Activated CD8-positive, alpha-beta T cell treated with anti-CD3 and anti-CD28 coated beads, Interleukin-2, amount 10 ng/mL, durations not matched to agents 7 days and 5 days (primary cell): ENCODE measurements at regions of chr3 and their contacts with region 1.

Region 1: DNA sequence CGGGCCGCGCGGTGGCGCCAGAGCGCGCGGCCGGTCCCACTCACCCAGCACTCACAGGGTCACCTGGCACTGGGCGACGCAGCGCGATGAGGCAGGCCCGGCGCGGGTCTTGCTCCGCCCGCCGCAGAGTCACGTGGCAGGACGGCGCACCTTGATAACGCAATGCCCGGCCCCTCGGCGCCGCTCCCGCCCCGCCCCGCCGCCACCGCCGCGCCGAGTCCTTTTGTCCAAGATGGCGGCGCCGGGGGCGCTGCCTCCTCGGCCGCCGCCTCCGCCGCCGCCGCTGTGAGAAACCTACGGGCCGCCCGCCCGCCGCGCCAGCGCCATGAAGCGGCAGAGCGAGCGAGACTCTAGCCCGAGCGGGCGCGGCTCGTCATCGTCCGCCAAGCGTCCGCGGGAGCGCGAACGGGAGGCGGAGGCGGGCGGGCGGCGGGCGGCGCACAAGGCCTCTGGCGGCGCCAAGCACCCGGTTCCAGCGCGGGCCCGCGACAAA is at the start of gene RBM15B:
- DNase-seq: peak; percentile 98
- ATAC-seq: peak; percentile 95
- H3K4me3 Mint-ChIP-seq: peak within 1 kb of the TSS; percentile 83
- H3K27ac Mint-ChIP-seq: peak within 1 kb of the TSS; percentile 94
- H3K4me1 Mint-ChIP-seq: peaks cover 79% of the 10 kb centered on the region
- H3K27me3 Mint-ChIP-seq: no peaks in the 10 kb centered on the region
- total RNA-seq, gene RBM15B: 30.7 to 30.8 TPM

Region 2: GRCh38 chr3:51379301-51379700 is 11.8 kb before region 1 on chr3:
- CTCF ChIA-PET with region 1: interaction called, 13 read pairs
- POLR2A ChIA-PET with region 1: no interaction called
- DNase-seq: no peak
- ATAC-seq: no peak
- H3K4me3 Mint-ChIP-seq: no peak overlapping the region
- H3K27ac Mint-ChIP-seq: peak overlapping the region; percentile 72
- H3K4me1 Mint-ChIP-seq: peaks cover 27% of the 10 kb centered on the region
- H3K27me3 Mint-ChIP-seq: no peaks in the 10 kb centered on the region

Region 3: DNA sequence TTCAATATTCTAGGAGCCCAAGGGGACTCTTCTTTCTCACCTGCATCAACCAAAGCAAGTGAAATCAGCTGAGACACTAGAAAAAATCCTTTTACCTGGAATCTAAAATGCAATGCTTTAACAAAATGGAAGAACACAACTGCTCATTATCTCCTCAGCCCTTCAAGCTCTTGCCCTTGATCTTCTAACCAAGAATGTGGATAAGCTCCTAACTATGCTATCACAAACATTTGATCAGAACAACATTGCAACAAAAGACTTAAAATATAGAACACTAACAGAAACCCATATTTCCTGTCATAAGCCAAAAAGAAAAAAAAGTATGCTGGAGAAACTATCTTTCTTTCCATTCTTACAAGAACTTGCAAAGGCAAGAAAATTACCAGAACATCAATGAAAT is 12.6 kb after region 1 on chr3:
- CTCF ChIA-PET with region 1: interaction called, 21 read pairs
- POLR2A ChIA-PET with region 1: no interaction called
- DNase-seq: no peak
- ATAC-seq: no peak
- H3K4me3 Mint-ChIP-seq: no peak overlapping the region
- H3K27ac Mint-ChIP-seq: peak overlapping the region; percentile 58
- H3K4me1 Mint-ChIP-seq: peaks cover 14% of the 10 kb centered on the region
- H3K27me3 Mint-ChIP-seq: no peaks in the 10 kb centered on the region

Region 4: DNA sequence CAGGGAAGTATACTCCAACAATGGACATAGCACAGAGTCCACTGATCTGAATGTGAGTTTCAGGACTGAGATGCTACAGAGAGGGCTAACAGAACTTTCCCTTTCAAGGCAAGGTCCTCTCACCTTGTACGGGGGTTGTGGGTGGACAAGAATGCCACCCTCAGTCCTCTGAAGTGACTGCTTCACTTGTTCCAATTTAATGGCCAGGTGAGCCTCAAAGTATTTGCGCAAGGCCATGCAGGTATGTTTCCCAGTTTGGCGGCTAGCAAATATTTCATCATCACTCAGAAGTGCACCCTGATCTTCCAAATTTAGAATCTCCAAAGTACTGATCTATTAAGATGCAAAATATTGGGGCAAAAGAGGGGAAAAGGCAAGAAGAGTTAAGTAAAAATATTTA is 38.0 kb after region 1 on chr3:
- CTCF ChIA-PET with region 1: interaction called, 41 read pairs
- POLR2A ChIA-PET with region 1: no interaction called
- DNase-seq: no peak
- ATAC-seq: no peak
- H3K4me3 Mint-ChIP-seq: no peak overlapping the region
- H3K27ac Mint-ChIP-seq: no peak overlapping the region
- H3K4me1 Mint-ChIP-seq: no peaks in the 10 kb centered on the region
- H3K27me3 Mint-ChIP-seq: no peaks in the 10 kb centered on the region

Region 5: GRCh38 chr3:51434746-51435327 is 43.7 kb after region 1 on chr3:
- CTCF ChIA-PET with region 1: interaction called, 41 read pairs
- POLR2A ChIA-PET with region 1: no interaction called
- DNase-seq: peak; percentile 65
- ATAC-seq: peak; percentile 94
- H3K4me3 Mint-ChIP-seq: no peak overlapping the region
- H3K27ac Mint-ChIP-seq: peak overlapping the region; percentile 11
- H3K4me1 Mint-ChIP-seq: peaks cover 7% of the 10 kb centered on the region
- H3K27me3 Mint-ChIP-seq: no peaks in the 10 kb centered on the region

Region 6: GRCh38 chr3:51477360-51477711 is 86.2 kb after region 1 on chr3:
- CTCF ChIA-PET with region 1: no interaction called
- POLR2A ChIA-PET with region 1: no interaction called
- DNase-seq: no peak
- ATAC-seq: no peak
- H3K4me3 Mint-ChIP-seq: no peak overlapping the region
- H3K27ac Mint-ChIP-seq: no peak overlapping the region
- H3K4me1 Mint-ChIP-seq: no peaks in the 10 kb centered on the region
- H3K27me3 Mint-ChIP-seq: no peaks in the 10 kb centered on the region

Region 7: GRCh38 chr3:51530490-51530889 is 139.4 kb after region 1 on chr3:
- CTCF ChIA-PET with region 1: no interaction called
- POLR2A ChIA-PET with region 1: no interaction called
- DNase-seq: no peak
- ATAC-seq: no peak
- H3K4me3 Mint-ChIP-seq: no peak overlapping the region
- H3K27ac Mint-ChIP-seq: no peak overlapping the region
- H3K4me1 Mint-ChIP-seq: no peaks in the 10 kb centered on the region
- H3K27me3 Mint-ChIP-seq: no peaks in the 10 kb centered on the region